ENCODE measurements at regions of chr10 and their contacts with region 1.

Region 1: DNA sequence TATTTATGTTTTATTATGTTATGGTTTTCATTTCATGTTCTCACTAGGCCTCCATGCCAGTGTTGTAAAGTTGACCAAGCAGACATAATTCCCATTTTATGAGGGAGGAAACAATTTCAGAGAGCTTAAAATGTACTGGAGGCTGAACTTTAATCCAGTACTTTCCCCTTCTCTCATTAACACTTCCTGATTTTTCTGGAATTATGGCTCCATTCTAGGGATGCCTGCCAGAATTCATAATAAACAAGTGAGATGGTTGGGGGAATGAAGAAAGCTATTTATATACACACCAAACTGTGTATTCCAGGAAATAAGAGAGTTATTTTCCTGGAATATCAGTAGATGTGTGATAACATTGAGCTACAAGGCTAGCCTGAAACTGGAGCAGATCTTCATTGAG is 6.9 kb downstream of the TMEM236 start:
- DNase-seq: no peak
- H3K4me3 ChIP-seq: no peak overlapping the region
- H3K27ac ChIP-seq: no peak overlapping the region
- H3K4me1 ChIP-seq: peaks cover 0 to 2% (median 1%) of the 10 kb centered on the region in 4 experiments; a peak in 2 of 7 replicates
- H3K27me3 ChIP-seq: peaks cover 14 to 20% (median 18%) of the 10 kb centered on the region in 4 experiments; a peak in 6 of 7 replicates
- CTCF ChIP-seq: no peak
- EP300 ChIP-seq: no peak
- POLR2A ChIP-seq: no peak
- RAD21 ChIP-seq: no peak

Region 2: GRCh38 chr10:17693009-17693408 is 65.9 kb before region 1 on chr10:
- CTCF ChIA-PET with region 1: no interaction called
- POLR2A ChIA-PET with region 1: no interaction called
- DNase-seq: no peak
- H3K4me3 ChIP-seq: no peak overlapping the region
- H3K27ac ChIP-seq: no peak overlapping the region
- H3K4me1 ChIP-seq: no peaks in the 10 kb centered on the region
- H3K27me3 ChIP-seq: no peaks in the 10 kb centered on the region
- CTCF ChIP-seq: no peak
- EP300 ChIP-seq: no peak
- POLR2A ChIP-seq: no peak
- RAD21 ChIP-seq: no peak

Region 3: DNA sequence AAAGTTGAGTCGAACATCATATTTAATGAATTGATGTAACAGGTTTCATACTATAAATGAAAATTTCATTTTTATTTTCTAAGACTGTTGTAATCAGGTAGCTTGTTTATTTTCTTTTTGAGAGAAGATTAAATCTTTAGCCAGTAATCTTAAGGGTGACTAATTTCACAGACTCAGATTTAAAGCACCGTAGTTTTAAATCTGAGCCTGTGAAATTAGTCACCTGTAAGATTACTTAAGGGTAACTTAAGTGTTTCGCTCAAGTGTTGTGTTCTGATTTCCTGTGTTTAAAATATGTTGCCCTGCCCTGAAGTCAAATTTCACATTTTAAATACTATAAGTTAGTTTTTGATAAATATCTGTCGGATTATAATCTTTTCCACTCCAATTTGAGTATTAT is 42.7 kb before region 1 on chr10:
- CTCF ChIA-PET with region 1: no interaction called
- POLR2A ChIA-PET with region 1: no interaction called
- DNase-seq: no peak
- H3K4me3 ChIP-seq: no peak overlapping the region
- H3K27ac ChIP-seq: no peak overlapping the region
- H3K4me1 ChIP-seq: no peaks in the 10 kb centered on the region
- H3K27me3 ChIP-seq: no peaks in the 10 kb centered on the region
- CTCF ChIP-seq: no peak
- EP300 ChIP-seq: no peak
- POLR2A ChIP-seq: no peak
- RAD21 ChIP-seq: no peak

Region 4: GRCh38 chr10:17744341-17744861 is 14.5 kb before region 1 on chr10:
- CTCF ChIA-PET with region 1: interaction called, 11 read pairs
- POLR2A ChIA-PET with region 1: interaction called, 3 read pairs
- DNase-seq: no peak
- H3K4me3 ChIP-seq: no peak overlapping the region
- H3K27ac ChIP-seq: no peak overlapping the region
- H3K4me1 ChIP-seq: no peaks in the 10 kb centered on the region
- H3K27me3 ChIP-seq: no peaks in the 10 kb centered on the region; a peak in 1 of 7 replicates
- CTCF ChIP-seq: no peak
- EP300 ChIP-seq: no peak
- POLR2A ChIP-seq: no peak
- RAD21 ChIP-seq: no peak

Measured in H1 (cell line).